Activated CD8-positive, alpha-beta T cell treated with anti-CD3 and anti-CD28 coated beads, Interleukin-2, amount 10 ng/mL, durations not matched to agents 7 days and 5 days (primary cell): ENCODE measurements at regions of chr6 and their contacts with region 1.

Region 1: DNA sequence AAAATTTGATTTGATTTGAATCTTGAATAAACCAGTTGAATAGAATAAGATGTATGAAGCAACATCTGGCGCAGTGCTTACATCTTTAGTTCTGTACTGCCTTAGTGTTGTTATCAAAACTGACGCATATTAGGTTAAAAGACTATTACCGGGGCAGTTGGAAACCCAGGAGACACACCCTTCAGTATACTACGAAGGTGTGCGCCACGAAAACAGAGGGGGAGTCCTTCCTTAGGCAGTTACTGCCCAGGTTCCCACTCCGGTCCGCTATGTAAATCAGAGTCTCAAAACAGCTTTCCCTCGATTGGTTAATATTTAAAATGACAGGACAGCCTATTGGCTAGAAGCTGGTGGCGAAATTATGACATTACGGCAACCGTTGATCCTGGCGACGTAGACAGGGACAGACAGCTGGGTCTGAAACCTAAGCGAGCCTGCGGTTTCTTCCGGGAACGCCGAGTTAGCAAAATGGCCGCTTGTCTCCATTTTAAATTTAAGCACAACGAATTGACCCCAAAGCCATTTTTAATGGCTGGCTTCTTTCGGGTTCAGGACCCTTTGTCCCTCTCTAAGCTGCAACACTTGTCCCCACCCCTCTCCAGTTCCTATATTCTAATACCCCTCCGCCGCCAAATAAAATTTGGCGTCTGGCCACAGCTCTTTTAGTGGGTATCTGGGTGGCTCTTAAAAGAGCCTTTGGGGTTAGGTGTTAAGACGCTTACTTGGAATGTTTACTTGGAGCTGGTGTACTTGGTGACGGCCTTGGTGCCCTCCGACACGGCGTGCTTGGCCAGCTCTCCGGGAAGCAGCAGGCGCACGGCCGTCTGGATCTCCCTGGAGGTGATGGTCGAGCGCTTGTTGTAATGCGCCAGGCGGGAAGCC is 35.8 kb downstream of the HFE start:
- DNase-seq: peak; percentile 98
- ATAC-seq: peak; percentile 50
- H3K4me3 Mint-ChIP-seq: peak overlapping the region; percentile 95
- H3K27ac Mint-ChIP-seq: peak overlapping the region; percentile 100
- H3K4me1 Mint-ChIP-seq: peaks cover 44% of the 10 kb centered on the region
- H3K27me3 Mint-ChIP-seq: peaks cover 1% of the 10 kb centered on the region

Region 2: DNA sequence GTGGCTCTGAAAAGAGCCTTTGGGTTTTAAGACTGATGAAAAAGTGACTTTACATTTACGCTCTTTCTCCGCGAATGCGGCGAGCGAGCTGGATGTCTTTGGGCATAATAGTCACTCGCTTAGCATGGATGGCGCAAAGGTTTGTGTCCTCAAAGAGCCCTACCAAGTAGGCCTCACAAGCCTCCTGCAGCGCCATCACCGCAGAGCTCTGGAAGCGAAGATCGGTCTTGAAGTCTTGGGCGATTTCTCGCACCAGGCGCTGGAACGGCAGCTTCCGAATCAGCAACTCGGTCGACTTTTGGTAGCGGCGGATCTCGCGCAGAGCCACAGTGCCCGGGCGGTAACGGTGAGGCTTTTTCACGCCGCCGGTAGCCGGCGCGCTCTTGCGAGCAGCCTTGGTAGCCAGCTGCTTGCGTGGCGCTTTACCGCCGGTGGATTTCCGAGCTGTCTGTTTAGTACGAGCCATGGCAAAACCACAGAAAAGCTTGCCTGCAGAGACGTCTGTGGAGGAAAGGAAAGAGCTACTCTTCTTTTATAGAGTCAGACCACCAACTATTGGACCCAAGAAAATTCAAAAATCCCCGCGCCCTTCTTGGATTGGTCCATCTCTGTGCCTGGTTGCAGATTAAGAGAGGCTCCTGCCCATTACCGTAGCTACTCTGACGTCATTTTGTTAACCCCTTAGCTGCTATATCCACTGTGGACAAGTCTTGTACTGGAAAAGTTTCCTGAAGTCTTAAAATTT is 91.3 kb before region 1 on chr6:
- CTCF ChIA-PET with region 1: interaction called, 9 read pairs
- POLR2A ChIA-PET with region 1: interaction called, 351 read pairs
- DNase-seq: peak; percentile 97
- ATAC-seq: peak; percentile 66
- H3K4me3 Mint-ChIP-seq: peak overlapping the region; percentile 93
- H3K27ac Mint-ChIP-seq: peak overlapping the region; percentile 99
- H3K4me1 Mint-ChIP-seq: peaks cover 68% of the 10 kb centered on the region
- H3K27me3 Mint-ChIP-seq: peaks cover 3% of the 10 kb centered on the region

Region 3: DNA sequence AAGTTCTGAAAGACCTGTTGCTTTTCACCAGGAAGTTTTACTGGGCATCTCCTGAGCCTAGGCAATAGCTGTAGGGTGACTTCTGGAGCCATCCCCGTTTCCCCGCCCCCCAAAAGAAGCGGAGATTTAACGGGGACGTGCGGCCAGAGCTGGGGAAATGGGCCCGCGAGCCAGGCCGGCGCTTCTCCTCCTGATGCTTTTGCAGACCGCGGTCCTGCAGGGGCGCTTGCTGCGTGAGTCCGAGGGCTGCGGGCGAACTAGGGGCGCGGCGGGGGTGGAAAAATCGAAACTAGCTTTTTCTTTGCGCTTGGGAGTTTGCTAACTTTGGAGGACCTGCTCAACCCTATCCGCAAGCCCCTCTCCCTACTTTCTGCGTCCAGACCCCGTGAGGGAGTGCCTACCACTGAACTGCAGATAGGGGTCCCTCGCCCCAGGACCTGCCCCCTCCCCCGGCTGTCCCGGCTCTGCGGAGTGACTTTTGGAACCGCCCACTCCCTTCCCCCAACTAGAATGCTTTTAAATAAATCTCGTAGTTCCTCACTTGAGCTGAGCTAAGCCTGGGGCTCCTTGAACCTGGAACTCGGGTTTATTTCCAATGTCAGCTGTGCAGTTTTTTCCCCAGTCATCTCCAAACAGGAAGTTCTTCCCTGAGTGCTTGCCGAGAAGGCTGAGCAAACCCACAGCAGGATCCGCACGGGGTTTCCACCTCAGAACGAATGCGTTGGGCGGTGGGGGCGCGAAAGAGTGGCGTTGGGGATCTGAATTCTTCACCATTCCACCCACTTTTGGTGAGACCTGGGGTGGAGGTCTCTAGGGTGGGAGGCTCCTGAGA is 35.5 kb before region 1 on chr6 and contains the start of gene HFE:
- CTCF ChIA-PET with region 1: no interaction called
- POLR2A ChIA-PET with region 1: interaction called, 28 read pairs
- DNase-seq: peak; percentile 50
- ATAC-seq: peak; percentile 48
- H3K4me3 Mint-ChIP-seq: peak within 1 kb of the TSS; percentile 80
- H3K27ac Mint-ChIP-seq: peak within 1 kb of the TSS; percentile 70
- H3K4me1 Mint-ChIP-seq: peaks cover 60% of the 10 kb centered on the region
- H3K27me3 Mint-ChIP-seq: peaks cover 1% of the 10 kb centered on the region
- total RNA-seq, gene HFE: 4.3 TPM

Region 4: DNA sequence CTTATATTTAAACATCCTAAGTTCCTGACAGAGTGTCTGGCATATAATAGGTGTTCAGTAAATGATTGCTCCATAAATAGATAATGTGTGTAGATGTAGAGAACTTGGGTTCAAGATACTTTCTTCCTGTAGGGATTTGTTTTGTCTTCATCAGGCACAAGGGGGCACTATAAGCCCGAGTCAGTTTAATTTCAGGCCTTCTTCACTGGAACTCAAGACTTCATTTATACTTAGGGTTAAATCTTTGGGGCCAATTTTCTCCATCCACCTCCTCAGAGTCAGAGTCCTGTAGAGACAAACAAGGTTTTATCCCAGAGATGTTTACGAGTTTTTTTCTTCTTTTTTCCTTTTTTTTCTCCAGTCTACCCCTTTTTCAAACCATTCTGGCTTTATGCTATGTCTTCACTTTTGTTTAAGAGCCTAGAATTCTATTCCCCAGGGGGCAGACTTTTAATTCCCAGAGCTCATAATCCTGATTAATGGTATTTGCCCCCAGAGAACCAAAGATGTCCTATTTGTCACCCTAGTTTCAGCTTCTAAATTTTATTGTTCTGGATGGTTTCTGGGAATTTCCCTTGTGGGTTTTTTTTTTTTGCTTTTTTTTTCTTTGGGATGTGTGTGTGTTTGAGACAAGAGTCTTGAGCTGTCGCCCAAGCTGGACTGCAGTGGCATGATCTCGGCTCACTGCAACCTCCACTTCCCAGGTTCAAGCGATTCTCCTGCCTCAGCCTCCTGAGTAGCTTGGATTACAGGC is 52.6 kb after region 1 on chr6:
- CTCF ChIA-PET with region 1: interaction called, 3 read pairs
- POLR2A ChIA-PET with region 1: interaction called, 3,176 read pairs
- DNase-seq: peak; percentile 82
- ATAC-seq: peak; percentile 11
- H3K4me3 Mint-ChIP-seq: peak overlapping the region; percentile 38
- H3K27ac Mint-ChIP-seq: peak overlapping the region; percentile 59
- H3K4me1 Mint-ChIP-seq: peaks cover 42% of the 10 kb centered on the region
- H3K27me3 Mint-ChIP-seq: no peaks in the 10 kb centered on the region

Region 5: GRCh38 chr6:26216356-26216885 is 93.4 kb after region 1 on chr6:
- CTCF ChIA-PET with region 1: interaction called, 3 read pairs
- POLR2A ChIA-PET with region 1: interaction called, 134 read pairs
- DNase-seq: peak; percentile 93
- ATAC-seq: peak; percentile 67
- H3K4me3 Mint-ChIP-seq: no peak overlapping the region
- H3K27ac Mint-ChIP-seq: no peak overlapping the region
- H3K4me1 Mint-ChIP-seq: peaks cover 43% of the 10 kb centered on the region
- H3K27me3 Mint-ChIP-seq: no peaks in the 10 kb centered on the region

Region 6: GRCh38 chr6:26285143-26286134 is 162.4 kb after region 1 on chr6:
- CTCF ChIA-PET with region 1: no interaction called
- POLR2A ChIA-PET with region 1: interaction called, 31 read pairs
- DNase-seq: peak; percentile 99
- ATAC-seq: peak; percentile 79
- H3K4me3 Mint-ChIP-seq: peak overlapping the region; percentile 93
- H3K27ac Mint-ChIP-seq: peak overlapping the region; percentile 95
- H3K4me1 Mint-ChIP-seq: peaks cover 42% of the 10 kb centered on the region
- H3K27me3 Mint-ChIP-seq: peaks cover 2% of the 10 kb centered on the region

Region 7: DNA sequence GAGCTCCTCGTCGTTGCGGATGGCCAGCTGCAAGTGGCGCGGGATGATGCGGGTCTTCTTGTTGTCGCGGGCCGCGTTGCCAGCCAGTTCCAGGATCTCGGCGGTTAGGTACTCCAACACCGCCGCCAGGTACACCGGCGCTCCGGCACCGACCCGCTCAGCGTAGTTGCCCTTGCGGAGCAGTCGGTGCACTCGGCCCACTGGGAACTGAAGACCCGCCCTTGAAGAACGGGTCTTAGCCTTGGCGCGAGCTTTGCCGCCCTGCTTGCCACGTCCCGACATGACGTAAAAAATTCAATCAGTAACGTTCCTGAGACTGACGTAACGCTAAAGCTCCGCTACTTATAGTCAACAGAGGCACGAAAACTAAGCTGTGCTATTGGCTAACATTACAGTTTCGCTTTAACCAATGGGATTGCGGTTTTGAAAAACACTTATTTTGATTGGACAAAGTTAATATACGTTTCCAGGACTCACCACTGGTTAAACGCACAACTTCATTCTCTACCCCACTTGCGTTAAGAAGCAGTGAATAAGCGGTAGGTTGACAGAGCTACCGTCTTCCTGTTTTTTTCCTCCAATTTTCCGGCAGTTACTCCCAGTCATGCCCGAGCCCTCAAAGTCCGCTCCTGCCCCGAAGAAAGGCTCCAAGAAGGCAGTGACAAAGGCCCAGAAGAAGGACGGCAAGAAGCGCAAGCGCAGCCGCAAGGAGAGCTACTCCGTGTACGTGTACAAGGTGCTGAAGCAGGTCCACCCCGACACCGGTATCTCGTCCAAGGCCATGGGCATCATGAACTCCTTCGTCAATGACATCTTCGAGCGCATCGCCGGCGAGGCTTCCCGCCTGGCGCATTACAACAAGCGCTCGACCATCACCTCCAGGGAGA is 1715.3 kb after region 1 on chr6:
- CTCF ChIA-PET with region 1: no interaction called
- POLR2A ChIA-PET with region 1: interaction called, 25 read pairs
- DNase-seq: peak; percentile 92
- ATAC-seq: peak; percentile 78
- H3K4me3 Mint-ChIP-seq: no peak overlapping the region
- H3K27ac Mint-ChIP-seq: no peak overlapping the region
- H3K4me1 Mint-ChIP-seq: peaks cover 33% of the 10 kb centered on the region
- H3K27me3 Mint-ChIP-seq: no peaks in the 10 kb centered on the region